ENCODE measurements at regions of chr18 and their contacts with region 1.

Region 1: GRCh38 chr18:63741769-63742168 is 33.4 kb upstream of the SERPINB7 start:
- DNase-seq: no peak
- ATAC-seq: no peak
- H3K4me3 ChIP-seq: no peak overlapping the region
- H3K27ac ChIP-seq: no peak overlapping the region
- H3K4me1 ChIP-seq: no peaks in the 10 kb centered on the region
- H3K27me3 ChIP-seq: no peaks in the 10 kb centered on the region
- CTCF ChIP-seq: peak; percentile 10; the same call in 1 of the 2 replicates

Region 2: GRCh38 chr18:62832282-62832681 is 909.5 kb before region 1 on chr18:
- CTCF ChIA-PET with region 1: no interaction called
- POLR2A ChIA-PET with region 1: no interaction called
- in situ Hi-C with region 1: no loop called
- intact Hi-C with region 1: no loop called
- DNase-seq: no peak
- ATAC-seq: no peak
- H3K4me3 ChIP-seq: no peak overlapping the region
- H3K27ac ChIP-seq: no peak overlapping the region
- H3K4me1 ChIP-seq: no peaks in the 10 kb centered on the region
- H3K27me3 ChIP-seq: no peaks in the 10 kb centered on the region
- CTCF ChIP-seq: no peak

Region 3: GRCh38 chr18:63433334-63433866 is 308.4 kb before region 1 on chr18:
- CTCF ChIA-PET with region 1: interaction called, 12 read pairs
- POLR2A ChIA-PET with region 1: no interaction called
- in situ Hi-C with region 1: no loop called
- intact Hi-C with region 1: no loop called
- DNase-seq: no peak
- ATAC-seq: no peak
- H3K4me3 ChIP-seq: no peak overlapping the region
- H3K27ac ChIP-seq: no peak overlapping the region
- H3K4me1 ChIP-seq: no peaks in the 10 kb centered on the region
- H3K27me3 ChIP-seq: 0 out of 2 replicates have a peak, but pooled peaks cover 3% of the 10 kb centered on the region
- CTCF ChIP-seq: no peak

Region 4: GRCh38 chr18:63518178-63519012 is 223.4 kb before region 1 on chr18:
- CTCF ChIA-PET with region 1: interaction called, 9 read pairs
- POLR2A ChIA-PET with region 1: no interaction called
- in situ Hi-C with region 1: no loop called
- intact Hi-C with region 1: loop called (anchors 2 kb)
- DNase-seq: peak; percentile 20
- ATAC-seq: peak; percentile 92
- H3K4me3 ChIP-seq: no peak overlapping the region
- H3K27ac ChIP-seq: no peak overlapping the region
- H3K4me1 ChIP-seq: no peaks in the 10 kb centered on the region
- H3K27me3 ChIP-seq: no peaks in the 10 kb centered on the region
- CTCF ChIP-seq: peak; percentile 65

Region 5: GRCh38 chr18:64785686-64786085 is 1043.9 kb after region 1 on chr18:
- CTCF ChIA-PET with region 1: no interaction called
- POLR2A ChIA-PET with region 1: interaction called, 13 read pairs
- in situ Hi-C with region 1: no loop called
- intact Hi-C with region 1: no loop called
- DNase-seq: no peak
- ATAC-seq: no peak
- H3K4me3 ChIP-seq: no peak overlapping the region
- H3K27ac ChIP-seq: no peak overlapping the region
- H3K4me1 ChIP-seq: no peaks in the 10 kb centered on the region
- H3K27me3 ChIP-seq: no peaks in the 10 kb centered on the region
- CTCF ChIP-seq: no peak

Measured in Panc1 (cell line).